ENCODE measurements at regions of chr6 and their contacts with region 1.

Region 1: GRCh38 chr6:139407718-139408222 is 33.3 kb upstream of the CITED2 start:
- DNase-seq: no peak
- ATAC-seq: no peak
- H3K4me3 ChIP-seq: no peak overlapping the region
- H3K4me3 Mint-ChIP-seq: no peak overlapping the region
- H3K27ac ChIP-seq: no peak overlapping the region
- H3K27ac Mint-ChIP-seq: no peak overlapping the region
- H3K4me1 ChIP-seq: no peaks in the 10 kb centered on the region
- H3K4me1 Mint-ChIP-seq: peaks cover 0 to 2% (median 0%) of the 10 kb centered on the region in 7 donors
- H3K27me3 ChIP-seq: no peaks in the 10 kb centered on the region
- H3K27me3 Mint-ChIP-seq: no peaks in the 10 kb centered on the region

Region 2: DNA sequence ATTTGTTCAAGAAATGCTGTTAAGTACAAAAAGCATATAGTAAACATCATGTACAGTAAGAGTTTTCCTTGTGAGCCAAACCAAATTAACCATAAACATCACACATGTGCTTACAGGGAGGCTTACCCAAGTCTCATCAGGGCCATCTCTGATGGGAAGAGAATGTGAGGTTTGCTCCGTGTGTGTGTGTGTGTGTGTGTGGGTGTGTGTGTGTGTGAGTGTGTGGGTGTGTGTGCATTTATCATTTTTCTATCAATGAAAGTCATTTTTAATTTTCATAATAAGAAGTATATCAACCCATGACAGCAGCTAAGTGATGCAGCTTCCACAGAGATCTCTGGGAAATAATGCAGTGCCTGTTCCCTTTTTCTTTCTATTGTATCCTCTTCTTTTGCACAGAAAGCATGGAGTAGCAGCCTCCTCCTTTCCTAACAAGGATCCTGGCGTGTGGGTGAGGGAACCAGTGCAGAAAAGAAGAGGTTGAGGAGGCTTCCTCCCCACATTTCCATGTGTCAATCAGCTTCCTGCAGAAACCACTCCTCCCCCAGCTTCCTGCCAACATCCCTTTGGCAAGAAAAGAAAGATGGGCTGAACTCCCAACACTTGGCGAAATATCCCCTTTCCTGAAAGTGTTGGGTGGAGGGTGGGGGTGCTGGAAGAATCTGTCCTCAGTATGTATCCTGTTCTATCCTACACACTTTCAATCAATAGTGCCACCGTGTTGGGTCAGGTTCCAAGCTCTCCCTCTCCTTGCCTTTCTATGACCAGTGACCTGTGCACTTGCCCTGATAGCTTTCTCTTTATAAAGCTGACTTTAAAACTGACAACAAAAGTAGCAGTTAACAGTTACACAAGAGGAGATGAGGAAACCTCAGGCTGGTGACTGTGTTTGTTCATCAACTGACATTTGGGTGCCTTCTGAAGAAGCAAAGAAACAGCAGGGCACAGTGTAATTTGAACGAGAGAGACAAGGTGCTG is 218.5 kb after region 1 on chr6:
- CTCF ChIA-PET with region 1: no interaction called
- POLR2A ChIA-PET with region 1: interaction called, 3 read pairs
- intact Hi-C with region 1: loop called in 1 of 2 experiments (anchors 10 kb)
- DNase-seq: no peak
- ATAC-seq: peak; percentile 60
- H3K4me3 ChIP-seq: no peak overlapping the region
- H3K4me3 Mint-ChIP-seq: no peak overlapping the region
- H3K27ac ChIP-seq: no peak overlapping the region
- H3K27ac Mint-ChIP-seq: peak overlapping the region in 1 of 9 donors; percentile 38
- H3K4me1 ChIP-seq: no peaks in the 10 kb centered on the region
- H3K4me1 Mint-ChIP-seq: peaks cover 0 to 4% (median 0%) of the 10 kb centered on the region in 7 donors
- H3K27me3 ChIP-seq: no peaks in the 10 kb centered on the region
- H3K27me3 Mint-ChIP-seq: peaks cover 8 to 43% (median 17%) of the 10 kb centered on the region in 5 donors

Measured in naive thymus-derived CD4-positive, alpha-beta T cell (primary cell).